ENCODE measurements at regions of chr5 and their contacts with region 1.

Region 1: GRCh38 chr5:126998201-126998631 is 32.1 kb downstream of the MARCHF3 start:
- DNase-seq: peak in 3 of 4 experiments; percentile 32 to 82 (median 66)
- ATAC-seq: peak; percentile 90
- H3K4me3 ChIP-seq: no peak overlapping the region; the same call in 1 of the 2 replicates
- H3K27ac ChIP-seq: peak overlapping the region; percentile 86
- H3K4me1 ChIP-seq: peaks cover 7 to 64% of the 10 kb centered on the region in 2 experiments
- H3K27me3 ChIP-seq: no peaks in the 10 kb centered on the region
- CTCF ChIP-seq: peak in 1 of 3 experiments; percentile 29; a peak in 2 of 6 replicates
- EP300 ChIP-seq: peak; percentile 77
- POLR2A ChIP-seq: no peak
- RAD21 ChIP-seq: peak; percentile 23 to 48; a peak in 3 of 4 replicates

Region 2: DNA sequence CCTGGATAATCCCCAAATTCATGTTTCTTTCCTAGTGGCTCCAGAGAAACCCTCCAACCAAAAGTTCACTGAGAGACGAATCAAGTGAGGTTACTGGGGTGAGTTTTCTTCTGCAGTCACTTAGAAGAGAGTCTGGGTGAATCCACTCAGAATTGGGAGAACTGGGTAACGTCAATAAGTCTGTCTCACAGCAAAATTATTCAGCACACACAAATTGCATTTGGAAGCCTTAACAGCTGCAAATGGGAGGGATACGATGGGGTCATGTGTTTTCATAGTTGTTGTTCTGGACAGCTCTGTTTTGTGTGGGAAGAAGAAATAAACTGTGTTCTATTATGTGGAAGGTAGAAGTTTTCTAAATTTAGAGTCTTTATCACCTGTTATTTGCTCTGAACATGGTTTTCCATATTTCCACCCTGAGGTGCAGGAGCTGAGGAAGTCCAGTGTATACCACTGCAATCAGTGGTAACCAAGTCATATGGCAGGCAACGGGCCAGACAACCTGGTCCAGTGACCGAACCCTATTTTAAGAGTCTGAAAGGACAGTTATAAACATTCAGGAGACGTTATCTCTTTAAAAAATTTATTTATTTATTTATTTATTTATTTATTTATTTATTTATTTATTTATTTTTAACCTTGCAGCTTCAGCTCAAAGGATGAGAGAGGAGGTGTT is 10.2 kb after region 1 on chr5:
- CTCF ChIA-PET with region 1: no interaction called
- POLR2A ChIA-PET with region 1: interaction called, 12 read pairs
- in situ Hi-C with region 1: no loop called
- intact Hi-C with region 1: no loop called
- DNase-seq: no peak
- ATAC-seq: peak; percentile 52
- H3K4me3 ChIP-seq: no peak overlapping the region
- H3K27ac ChIP-seq: peak overlapping the region; percentile 25; the same call in 1 of the 3 replicates
- H3K4me1 ChIP-seq: peaks cover 0 to 23% of the 10 kb centered on the region in 2 experiments; a peak in 3 of 5 replicates
- H3K27me3 ChIP-seq: no peaks in the 10 kb centered on the region
- CTCF ChIP-seq: no peak
- EP300 ChIP-seq: no peak
- POLR2A ChIP-seq: no peak
- RAD21 ChIP-seq: no peak

Region 3: DNA sequence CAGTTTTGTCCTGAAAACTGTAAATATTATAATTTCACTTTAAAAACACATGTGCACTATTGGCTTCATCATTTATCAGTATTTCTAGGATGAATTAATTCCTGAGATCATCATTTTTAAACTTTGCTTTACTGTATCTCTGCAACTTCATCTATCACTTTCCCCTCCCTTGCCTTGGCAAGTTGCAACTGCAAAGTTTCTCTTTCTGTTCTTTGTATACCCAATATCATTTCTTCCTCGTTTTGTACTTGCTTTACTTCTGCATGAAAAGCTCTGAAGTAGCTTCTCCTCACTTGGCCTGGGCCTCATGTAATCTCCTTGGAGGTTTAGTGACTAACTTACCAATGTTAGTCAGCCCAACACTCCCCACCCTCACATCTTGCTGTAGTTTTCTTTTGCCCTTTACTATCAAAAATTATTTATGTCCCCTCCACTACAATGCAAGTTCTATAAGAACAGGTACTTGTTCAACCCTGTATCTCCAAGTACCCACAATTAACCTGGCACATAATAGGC is 62.3 kb after region 1 on chr5:
- CTCF ChIA-PET with region 1: no interaction called
- POLR2A ChIA-PET with region 1: no interaction called
- in situ Hi-C with region 1: no loop called
- intact Hi-C with region 1: no loop called
- DNase-seq: no peak
- ATAC-seq: no peak
- H3K4me3 ChIP-seq: no peak overlapping the region
- H3K27ac ChIP-seq: no peak overlapping the region
- H3K4me1 ChIP-seq: no peaks in the 10 kb centered on the region
- H3K27me3 ChIP-seq: no peaks in the 10 kb centered on the region
- CTCF ChIP-seq: no peak
- EP300 ChIP-seq: no peak
- POLR2A ChIP-seq: no peak
- RAD21 ChIP-seq: no peak